ENCODE measurements at regions of chr3 and their contacts with region 1.

Region 1: GRCh38 chr3:33440323-33441232 is at the start of gene UBP1:
- DNase-seq: peak; percentile 100
- H3K4me3 ChIP-seq: peak within 1 kb of the TSS; percentile 90
- H3K27ac ChIP-seq: peak within 1 kb of the TSS; percentile 96
- H3K4me1 ChIP-seq: peaks cover 33% of the 10 kb centered on the region
- CTCF ChIP-seq: no peak
- total RNA-seq, gene UBP1: 53.2 and 73.0 TPM in 2 replicates

Region 2: GRCh38 chr3:33113772-33114621 is 326.6 kb before region 1 on chr3 and contains the start of gene CRTAP:
- CTCF ChIA-PET with region 1: no interaction called
- POLR2A ChIA-PET with region 1: interaction called, 3 read pairs
- intact Hi-C with region 1: loop called (anchors 1 kb)
- DNase-seq: peak; percentile 93
- H3K4me3 ChIP-seq: peak within 1 kb of the TSS; percentile 74
- H3K27ac ChIP-seq: peak within 1 kb of the TSS; percentile 89
- H3K4me1 ChIP-seq: peaks cover 31% of the 10 kb centered on the region
- CTCF ChIP-seq: no peak
- total RNA-seq, gene CRTAP: 11.8 and 19.2 TPM in 2 replicates

Region 3: DNA sequence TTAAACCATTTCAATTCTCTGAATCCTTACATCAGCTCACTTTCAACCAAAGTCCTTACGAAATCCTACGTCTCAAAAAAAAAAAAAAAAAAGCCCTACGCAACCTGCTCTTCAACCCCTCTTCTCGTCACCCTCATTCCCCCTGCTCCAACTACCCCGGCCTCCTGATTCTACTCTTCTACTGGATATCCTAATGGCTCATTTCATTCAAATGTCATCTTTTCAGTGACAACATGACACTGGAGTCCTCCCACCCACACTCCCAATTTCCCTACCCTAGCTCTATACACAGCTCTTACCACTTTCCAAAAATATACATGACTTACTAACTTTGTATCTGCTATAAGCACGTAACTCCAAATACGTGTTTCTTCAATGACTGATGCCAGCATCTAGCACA is 11.8 kb before region 1 on chr3:
- CTCF ChIA-PET with region 1: no interaction called
- POLR2A ChIA-PET with region 1: interaction called, 22 read pairs
- intact Hi-C with region 1: no loop called
- DNase-seq: no peak
- H3K4me3 ChIP-seq: no peak overlapping the region
- H3K27ac ChIP-seq: no peak overlapping the region
- H3K4me1 ChIP-seq: peaks cover 21% of the 10 kb centered on the region
- CTCF ChIP-seq: no peak

Region 4: DNA sequence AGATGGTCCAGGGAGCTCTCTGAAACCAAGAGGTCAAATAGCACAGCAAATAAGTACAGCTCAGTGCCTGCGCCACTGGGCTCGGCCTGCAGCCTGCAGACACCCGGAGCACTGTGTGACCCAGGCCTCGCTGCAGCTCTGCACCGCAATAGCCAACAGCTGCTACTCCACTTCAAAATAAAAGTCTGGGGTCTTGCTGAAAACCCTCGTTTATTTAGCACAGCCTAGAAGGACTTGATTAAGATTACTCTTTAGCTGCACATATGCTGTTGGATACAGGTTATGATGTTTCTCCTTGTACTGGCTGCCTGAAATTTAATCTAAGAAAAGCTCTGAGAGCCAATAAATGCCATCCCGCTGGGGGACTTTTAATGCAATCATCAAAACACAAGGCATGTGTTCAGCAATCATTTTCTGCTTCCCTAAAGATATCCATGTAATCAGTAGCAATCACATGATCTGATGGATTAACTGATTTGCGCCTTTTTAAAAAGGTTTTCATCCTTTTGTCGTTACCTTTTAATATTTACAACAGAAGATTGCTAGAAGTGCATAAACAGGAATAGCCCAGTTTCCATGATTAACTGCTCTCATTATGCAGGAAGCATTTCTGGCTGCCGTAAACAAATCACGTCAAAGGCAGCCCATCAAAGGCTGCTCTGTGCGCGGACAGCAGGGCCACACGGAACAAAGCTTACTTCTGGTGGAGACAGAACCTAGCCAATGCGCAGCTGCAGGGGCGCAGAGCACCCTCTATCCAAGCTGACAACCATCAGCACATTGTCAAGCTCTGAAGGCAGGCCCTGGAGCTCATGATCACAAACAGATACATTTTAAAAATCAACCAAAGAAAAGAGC is 218.6 kb after region 1 on chr3:
- CTCF ChIA-PET with region 1: no interaction called
- POLR2A ChIA-PET with region 1: interaction called, 11 read pairs
- intact Hi-C with region 1: loop called (anchors 2 kb)
- DNase-seq: peak; percentile 86
- H3K4me3 ChIP-seq: peak overlapping the region; percentile 61
- H3K27ac ChIP-seq: peak overlapping the region; percentile 71
- H3K4me1 ChIP-seq: peaks cover 40% of the 10 kb centered on the region
- CTCF ChIP-seq: 0 out of 2 replicates have a peak, but pooled peaks have one; percentile 26

Region 5: DNA sequence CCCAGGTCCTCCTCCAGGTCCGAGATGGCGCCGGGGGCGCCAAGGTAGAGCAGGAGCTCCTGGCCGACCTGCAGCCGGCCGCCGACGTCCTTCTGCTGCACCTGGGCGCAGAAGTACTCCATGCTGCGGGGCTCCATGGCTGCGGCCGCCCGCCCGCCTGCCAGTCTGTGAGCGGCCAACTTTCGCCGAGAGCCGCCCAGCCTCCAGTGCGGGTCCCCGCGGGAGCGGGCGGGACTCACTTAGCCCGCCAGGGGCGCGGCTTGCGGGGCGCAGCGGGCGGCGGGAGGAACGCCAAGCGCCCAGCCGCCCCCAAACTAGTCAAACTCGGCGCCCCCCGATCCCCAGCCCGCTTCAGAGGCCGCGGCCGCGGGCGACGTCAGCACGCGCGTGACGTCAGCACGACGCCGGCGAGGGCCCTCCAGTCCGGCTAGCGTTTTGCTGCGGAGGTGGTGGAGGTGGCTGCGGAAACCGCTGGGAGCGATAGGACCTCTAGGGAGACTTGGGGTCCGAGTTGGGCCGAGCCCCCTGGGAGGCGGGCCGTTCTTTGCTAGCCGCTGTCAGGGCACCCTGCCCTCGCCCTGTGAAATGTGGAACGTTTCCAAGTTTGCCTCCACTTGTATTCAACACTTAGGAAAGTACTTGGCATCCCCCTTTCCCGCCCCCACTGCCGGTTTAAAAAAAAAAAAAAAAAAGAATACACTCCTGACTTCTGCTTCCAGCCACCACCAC is 277.5 kb after region 1 on chr3 and contains the start of gene CLASP2:
- CTCF ChIA-PET with region 1: no interaction called
- POLR2A ChIA-PET with region 1: no interaction called
- intact Hi-C with region 1: loop called (anchors 2 kb)
- DNase-seq: peak; percentile 92
- H3K4me3 ChIP-seq: peak within 1 kb of the TSS; percentile 94
- H3K27ac ChIP-seq: peak within 1 kb of the TSS; percentile 69
- H3K4me1 ChIP-seq: peaks cover 27% of the 10 kb centered on the region
- CTCF ChIP-seq: no peak
- total RNA-seq, gene CLASP2: 99.1 and 108 TPM in 2 replicates

Region 6: GRCh38 chr3:33798411-33799201 is 358.0 kb after region 1 on chr3 and contains the start of gene PDCD6IP:
- CTCF ChIA-PET with region 1: no interaction called
- POLR2A ChIA-PET with region 1: interaction called, 12 read pairs
- intact Hi-C with region 1: loop called (anchors 1 kb)
- DNase-seq: peak; percentile 92
- H3K4me3 ChIP-seq: peak within 1 kb of the TSS; percentile 84
- H3K27ac ChIP-seq: peak within 1 kb of the TSS; percentile 56
- H3K4me1 ChIP-seq: peaks cover 32% of the 10 kb centered on the region
- CTCF ChIP-seq: peak; percentile 34; the same call in 1 of the 2 replicates
- total RNA-seq, gene PDCD6IP: 75.5 and 126 TPM in 2 replicates